Pancreas (tissue), 10 donors: ENCODE measurements at regions of chr3 and their contacts with region 1.

Region 1: DNA sequence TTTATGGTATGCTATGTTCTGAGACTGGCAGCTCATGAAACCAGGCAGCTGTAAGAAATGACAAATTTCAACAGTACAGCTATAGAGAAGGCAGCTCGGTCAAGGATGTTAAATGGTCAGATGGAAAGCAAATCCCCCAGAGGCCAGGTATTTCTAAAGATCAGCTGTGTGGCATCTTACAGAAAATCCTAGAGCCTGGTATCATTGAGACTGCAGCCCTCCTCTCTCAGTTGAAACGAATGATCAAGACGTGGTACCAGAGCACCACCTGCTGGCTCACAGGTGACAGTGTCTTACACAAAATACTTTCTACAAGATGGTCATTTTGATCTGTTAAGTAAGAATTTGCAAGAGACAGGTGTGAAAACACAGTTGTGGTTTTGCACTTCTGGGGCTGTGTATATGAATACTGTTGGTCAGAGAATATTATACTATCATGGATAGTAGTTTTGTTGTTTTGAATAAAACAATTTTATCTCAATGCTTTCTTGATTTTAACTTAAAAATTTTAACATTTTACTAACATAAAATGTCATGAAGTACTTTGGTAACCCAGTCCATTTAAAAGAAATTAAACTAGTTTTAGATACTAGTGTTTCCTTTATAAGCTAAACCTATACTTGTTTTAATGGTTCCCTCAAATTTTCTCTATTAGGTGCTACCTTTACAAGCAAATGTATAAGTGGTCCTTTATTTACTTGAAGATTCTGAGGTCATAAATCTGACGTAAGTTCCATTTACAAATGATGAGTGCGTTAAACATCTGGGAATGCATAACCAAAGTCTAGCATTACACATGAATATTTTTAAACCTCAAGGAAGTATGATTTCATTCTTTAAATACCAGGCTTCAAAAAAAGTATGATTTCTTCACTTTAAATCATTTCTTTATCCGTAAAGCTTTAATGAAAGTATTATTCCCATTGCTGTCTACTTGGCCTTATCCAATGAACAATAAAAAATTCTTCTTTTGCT is 121.8 kb downstream of the PDZRN3 start:
- DNase-seq: peak in 5 of 6 donors; percentile 42 to 76 (median 67)
- ATAC-seq: peak; percentile 79 to 91 (median 88)
- H3K4me3 ChIP-seq: no peak overlapping the region
- H3K27ac ChIP-seq: no peak overlapping the region
- H3K4me1 ChIP-seq: peaks cover 0 to 7% (median 3%) of the 10 kb centered on the region in 3 donors
- H3K27me3 ChIP-seq: no peaks in the 10 kb centered on the region
- CTCF ChIP-seq: peak; percentile 49 to 77 (median 67)

Region 2: GRCh38 chr3:73459711-73460110 is 43.2 kb before region 1 on chr3:
- intact Hi-C with region 1: loop called in 1 of 3 experiments (anchors 5 kb)
- DNase-seq: no peak
- ATAC-seq: no peak
- H3K4me3 ChIP-seq: no peak overlapping the region
- H3K27ac ChIP-seq: no peak overlapping the region
- H3K4me1 ChIP-seq: no peaks in the 10 kb centered on the region
- H3K27me3 ChIP-seq: no peaks in the 10 kb centered on the region
- CTCF ChIP-seq: no peak